ENCODE measurements at regions of chr14 and their contacts with region 1.

Region 1: DNA sequence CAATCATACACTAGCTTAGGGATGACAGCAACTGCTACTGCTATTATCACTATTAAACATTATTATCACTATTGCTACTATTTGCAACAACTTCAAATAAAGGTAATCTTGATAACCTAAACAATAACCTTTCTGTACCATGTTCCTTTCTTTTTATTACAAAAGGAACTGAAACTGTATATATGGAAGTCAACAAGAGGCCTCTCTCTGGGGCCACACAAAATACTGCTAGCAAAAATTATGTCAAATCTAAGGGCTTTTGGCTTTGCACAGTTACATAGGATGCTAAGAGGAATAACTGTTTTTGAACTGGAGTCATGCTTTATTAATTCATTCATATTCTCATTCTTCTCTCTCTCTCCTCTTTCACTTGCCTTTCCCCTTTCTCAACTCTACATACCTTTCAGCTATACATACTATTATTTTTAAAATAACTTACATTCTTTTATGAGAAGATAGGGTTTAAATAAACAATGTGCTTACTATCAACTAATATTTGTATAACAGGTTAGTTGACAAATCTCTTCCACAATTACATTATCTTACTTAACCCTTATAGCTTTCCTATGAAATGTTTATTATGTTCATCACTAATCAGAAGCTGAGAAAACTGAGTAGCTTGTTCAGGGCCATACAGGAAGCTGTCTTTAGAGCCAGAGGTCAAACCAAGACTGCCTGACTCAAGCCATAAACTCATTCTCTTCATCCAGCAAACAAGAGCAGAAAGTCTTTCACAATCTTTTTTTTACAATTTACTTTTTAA is 25.7 kb downstream of the SPTSSA start:
- DNase-seq: peak in 1 of 3 donors; percentile 31
- ATAC-seq: peak; percentile 89
- H3K4me3 ChIP-seq: no peak overlapping the region
- H3K4me1 ChIP-seq: peaks cover 15% of the 10 kb centered on the region
- CTCF ChIP-seq: no peak

Region 2: DNA sequence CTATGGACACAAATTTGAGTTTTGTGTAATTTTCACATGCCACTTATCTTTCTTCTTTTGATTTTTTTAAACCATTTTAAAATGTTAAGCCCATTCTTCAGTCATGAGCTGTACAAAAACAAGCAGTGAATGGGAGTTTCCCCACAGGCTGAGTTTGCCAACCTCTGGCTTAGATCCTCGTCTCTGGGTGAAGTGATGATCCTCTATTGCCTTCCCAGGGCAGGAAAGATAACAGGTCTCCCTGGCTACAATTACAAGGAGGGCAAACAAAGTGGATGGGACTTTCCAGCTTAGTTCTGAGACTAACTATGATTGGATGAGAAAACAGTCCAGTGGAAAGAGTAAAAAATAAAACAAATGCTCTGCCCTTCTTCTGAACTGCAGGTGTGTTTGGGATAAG is 178.0 kb before region 1 on chr14:
- intact Hi-C with region 1: no loop called
- DNase-seq: peak in 1 of 3 donors; percentile 12
- ATAC-seq: peak; percentile 91
- H3K4me3 ChIP-seq: no peak overlapping the region
- H3K4me1 ChIP-seq: peaks cover 5% of the 10 kb centered on the region
- CTCF ChIP-seq: no peak

Region 3: GRCh38 chr14:34374980-34375740 is 61.1 kb before region 1 on chr14:
- intact Hi-C with region 1: loop called in 1 of 2 experiments (anchors 10 kb)
- DNase-seq: no peak
- ATAC-seq: peak; percentile 91
- H3K4me3 ChIP-seq: no peak overlapping the region
- H3K4me1 ChIP-seq: peaks cover 13% of the 10 kb centered on the region
- CTCF ChIP-seq: no peak

Region 4: DNA sequence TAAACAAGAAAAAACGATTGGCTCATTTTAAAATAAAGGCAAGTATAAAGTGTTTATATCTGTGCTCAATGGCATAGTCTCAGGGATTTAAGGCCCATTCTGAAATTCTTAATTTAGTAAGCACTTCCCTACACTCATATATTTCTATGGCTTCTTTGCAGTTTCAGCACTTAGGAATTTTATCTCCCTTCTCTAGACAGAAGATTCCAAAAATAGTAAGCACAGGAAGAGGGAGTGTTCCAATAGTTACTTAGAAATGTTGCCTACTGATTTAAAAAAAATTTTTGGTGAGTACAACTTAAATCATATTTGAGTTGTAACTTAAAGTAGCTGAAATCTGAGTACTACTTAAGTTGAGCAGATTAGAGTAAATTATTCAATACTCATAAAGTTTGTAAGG is 1117.5 kb after region 1 on chr14:
- intact Hi-C with region 1: no loop called
- DNase-seq: no peak
- ATAC-seq: no peak
- H3K4me3 ChIP-seq: no peak overlapping the region
- H3K4me1 ChIP-seq: no peaks in the 10 kb centered on the region
- CTCF ChIP-seq: no peak

Measured in mucosa of descending colon (tissue), 3 donors.